BJ (cell line): ENCODE measurements at regions of chr15 and their contacts with region 1.

Region 1: GRCh38 chr15:90306560-90306959 is 41.1 kb downstream of the NGRN start:
- DNase-seq: no peak
- H3K4me3 ChIP-seq: no peak overlapping the region
- H3K27me3 ChIP-seq: no peaks in the 10 kb centered on the region
- CTCF ChIP-seq: no peak

Region 2: DNA sequence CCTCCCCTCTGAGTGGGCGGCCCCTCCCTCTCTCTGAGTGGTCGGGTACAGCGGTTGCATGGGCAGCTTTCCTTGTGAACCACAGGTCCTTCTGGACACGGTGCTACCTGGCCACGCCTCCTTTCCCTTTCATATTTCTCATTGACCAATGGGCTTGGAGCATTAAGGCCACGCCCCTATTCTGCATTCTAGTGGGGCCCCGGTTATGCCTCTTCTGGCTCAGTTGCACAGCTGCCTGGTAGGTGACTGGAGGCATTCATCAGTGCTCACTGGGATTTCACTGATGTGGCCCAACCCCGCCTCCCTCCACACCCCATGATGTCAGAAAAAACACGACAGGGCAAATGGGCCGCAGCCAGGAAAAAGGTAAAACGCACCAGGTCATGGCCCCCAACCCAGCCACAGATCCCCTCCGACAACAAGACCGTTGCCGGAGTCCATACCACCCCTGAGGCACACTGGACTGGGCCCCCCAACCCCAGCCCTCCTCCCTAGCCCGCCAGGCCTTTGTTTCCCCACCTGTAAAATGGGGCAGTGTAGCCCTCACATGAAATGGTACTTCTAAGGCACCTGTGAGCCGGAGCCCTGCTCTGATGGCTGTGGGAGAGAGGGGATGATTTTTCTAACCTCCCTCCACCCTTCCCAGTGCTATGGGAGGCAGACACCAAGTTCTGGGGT is 14.7 kb before region 1 on chr15:
- CTCF ChIA-PET with region 1: interaction called, 39 read pairs
- POLR2A ChIA-PET with region 1: no interaction called
- DNase-seq: no peak
- H3K4me3 ChIP-seq: no peak overlapping the region
- H3K27me3 ChIP-seq: no peaks in the 10 kb centered on the region
- CTCF ChIP-seq: no peak